H1 (cell line): ENCODE measurements at regions of chr16 and their contacts with region 1.

Region 1: GRCh38 chr16:20889625-20890275 is 10.4 kb downstream of the DCUN1D3 start:
- DNase-seq: no peak
- H3K4me3 ChIP-seq: no peak overlapping the region
- H3K27ac ChIP-seq: no peak overlapping the region
- H3K4me1 ChIP-seq: peaks cover 0 to 12% (median 6%) of the 10 kb centered on the region in 4 experiments; a peak in 4 of 7 replicates
- H3K27me3 ChIP-seq: no peaks in the 10 kb centered on the region
- CTCF ChIP-seq: no peak
- EP300 ChIP-seq: no peak
- POLR2A ChIP-seq: no peak
- RAD21 ChIP-seq: no peak

Region 2: DNA sequence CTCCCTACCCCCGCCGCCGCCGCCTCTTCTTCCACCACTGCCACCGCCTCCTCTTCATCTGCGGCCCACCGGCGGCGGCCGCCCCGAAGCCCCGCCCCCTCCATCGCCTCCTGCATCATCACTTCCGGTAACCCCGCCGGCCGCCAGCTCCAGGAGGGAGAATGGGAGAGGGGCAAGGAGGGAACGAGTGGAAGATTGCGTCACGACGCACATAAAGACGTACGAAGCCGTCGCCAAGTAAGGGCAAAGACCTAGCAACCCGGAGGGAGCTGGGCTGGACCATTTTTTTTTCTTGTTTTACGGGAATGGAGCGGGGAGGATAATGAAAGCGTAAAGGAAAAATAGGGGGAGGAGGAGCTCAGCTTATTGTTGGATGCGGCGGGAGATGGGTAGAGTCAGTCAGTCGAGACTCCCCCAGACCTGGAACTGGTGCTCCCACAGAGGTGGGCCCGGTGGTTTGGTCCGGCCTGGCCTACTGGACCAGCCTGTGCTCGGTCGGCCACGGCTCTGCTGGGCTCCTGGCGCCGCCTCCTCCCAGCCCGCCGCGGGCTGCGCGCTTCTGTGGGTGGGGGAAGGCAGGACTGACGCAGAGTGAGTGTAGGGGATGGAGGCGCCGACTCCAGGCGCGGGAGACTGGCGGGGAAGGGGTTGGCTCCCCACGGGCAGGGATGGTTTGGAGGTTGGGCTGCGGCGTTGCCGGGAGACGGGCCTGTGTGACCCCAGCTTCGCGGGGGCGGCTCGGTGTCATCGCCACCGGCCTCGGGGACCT is 10.7 kb after region 1 on chr16 and contains the starts of genes DCUN1D3 and LYRM1:
- CTCF ChIA-PET with region 1: interaction called, 4 read pairs
- POLR2A ChIA-PET with region 1: interaction called, 16 read pairs
- DNase-seq: peak; percentile 91 to 94
- H3K4me3 ChIP-seq: peak within 1 kb of the TSS; percentile 86 to 96 (median 90)
- H3K27ac ChIP-seq: peak within 1 kb of the TSS; percentile 97
- H3K4me1 ChIP-seq: peaks cover 0 to 9% (median 3%) of the 10 kb centered on the region in 4 experiments; a peak in 3 of 7 replicates
- H3K27me3 ChIP-seq: no peaks in the 10 kb centered on the region
- CTCF ChIP-seq: no peak
- EP300 ChIP-seq: peak in 1 of 2 experiments; percentile 98; a peak in 2 of 3 replicates
- POLR2A ChIP-seq: peak; percentile 60 to 91
- RAD21 ChIP-seq: 0 out of 4 replicates have a peak, but pooled peaks of 1 of the 2 experiments have one; percentile 3
- total RNA-seq, gene DCUN1D3: 18.2 and 18.5 TPM in 2 replicates
- total RNA-seq, gene LYRM1: 13.4 and 14.2 TPM in 2 replicates